K562 (cell line): ENCODE measurements at regions of chr2 and their contacts with region 1.

Region 1: DNA sequence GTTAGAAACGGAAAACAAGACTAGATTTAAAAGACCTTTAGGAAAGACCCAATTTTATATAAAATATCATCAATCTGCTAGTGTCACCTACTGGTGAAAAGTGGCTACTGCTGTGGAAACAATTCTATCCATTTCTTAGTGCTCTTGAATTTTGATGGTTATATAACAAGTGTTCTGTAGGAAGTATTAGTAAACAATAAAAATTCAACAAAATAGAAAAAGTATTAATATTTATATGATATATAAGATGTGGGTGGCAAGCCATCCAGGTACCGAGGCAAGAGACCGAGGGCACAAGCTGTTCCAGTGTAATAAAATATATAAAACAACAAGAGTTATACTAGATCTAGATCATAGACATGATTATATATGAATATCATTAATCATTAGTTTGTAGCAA is 6.2 kb upstream of the TMEM87B start:
- DNase-seq: peak; percentile 27 to 68 (median 37)
- ATAC-seq: peak; percentile 87
- H3K4me3 ChIP-seq: no peak overlapping the region
- H3K27ac ChIP-seq: no peak overlapping the region
- H3K4me1 ChIP-seq: peaks cover 8 to 17% of the 10 kb centered on the region in 2 experiments; a peak in 4 of 5 replicates
- H3K27me3 ChIP-seq: no peaks in the 10 kb centered on the region
- CTCF ChIP-seq: peak; percentile 56 to 94 (median 67); a peak in 5 of 6 replicates
- EP300 ChIP-seq: no peak
- POLR2A ChIP-seq: no peak
- RAD21 ChIP-seq: peak; percentile 92

Region 2: GRCh38 chr2:111897924-111898702 is 150.8 kb before region 1 on chr2 and contains the start of gene MERTK:
- CTCF ChIA-PET with region 1: interaction called, 8 read pairs
- POLR2A ChIA-PET with region 1: interaction called, 4 read pairs
- in situ Hi-C with region 1: no loop called
- intact Hi-C with region 1: loop called (anchors 1 kb)
- DNase-seq: peak; percentile 77 to 85 (median 84)
- ATAC-seq: peak; percentile 92
- H3K4me3 ChIP-seq: peak within 1 kb of the TSS; percentile 59
- H3K27ac ChIP-seq: 0 out of 3 replicates have a peak within 1 kb of the TSS, but pooled peaks have one; percentile 22
- H3K4me1 ChIP-seq: peaks cover 20 to 24% of the 10 kb centered on the region in 2 experiments
- H3K27me3 ChIP-seq: peaks cover 0 to 6% of the 10 kb centered on the region in 2 experiments; a peak in 2 of 5 replicates
- CTCF ChIP-seq: peak; percentile 71 to 93 (median 79)
- EP300 ChIP-seq: no peak
- POLR2A ChIP-seq: peak; percentile 65; the same call in 1 of the 2 replicates
- RAD21 ChIP-seq: peak; percentile 84 to 89
- polyA plus RNA-seq, gene MERTK: 0.23 to 0.31 TPM

Region 3: DNA sequence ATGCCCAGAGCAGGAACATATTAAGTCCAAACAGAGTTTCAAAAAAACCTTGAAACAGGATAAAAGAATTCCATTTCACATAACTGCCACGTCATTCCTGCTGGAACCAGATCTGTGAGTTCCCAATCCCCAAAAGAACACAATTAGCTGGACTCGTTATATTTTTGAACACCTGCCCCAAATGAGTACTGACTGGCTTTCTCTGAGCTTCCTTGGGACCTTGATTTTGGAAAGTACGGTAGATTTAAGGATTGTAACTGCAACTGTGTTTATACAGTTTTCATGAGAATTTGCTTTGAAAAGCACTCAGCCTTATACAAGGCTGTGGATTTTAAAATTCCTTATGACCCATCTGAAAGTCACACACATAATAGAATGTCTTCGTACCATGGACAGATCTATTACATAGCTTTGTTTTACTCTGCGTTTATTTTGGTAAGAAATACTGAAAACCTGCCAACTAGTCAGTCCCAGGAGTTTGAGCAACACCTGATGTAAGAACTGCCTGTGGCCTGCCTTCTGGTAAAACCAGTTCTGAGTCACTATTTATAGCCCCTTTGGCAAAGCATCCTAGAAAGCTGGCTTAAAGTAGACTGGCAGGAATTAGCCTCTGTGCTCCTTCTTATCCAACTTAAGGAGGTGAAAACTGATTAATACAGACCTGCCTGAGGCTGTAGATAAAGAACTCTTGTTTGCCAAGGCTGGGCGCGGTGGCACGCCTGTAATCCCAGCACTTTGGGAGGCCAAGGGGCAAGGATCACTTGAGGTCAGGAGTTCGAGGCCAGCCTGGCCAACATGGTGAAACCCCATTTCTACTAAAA is 102.4 kb before region 1 on chr2:
- CTCF ChIA-PET with region 1: no interaction called
- POLR2A ChIA-PET with region 1: no interaction called
- in situ Hi-C with region 1: no loop called
- intact Hi-C with region 1: no loop called
- DNase-seq: no peak
- ATAC-seq: no peak
- H3K4me3 ChIP-seq: no peak overlapping the region
- H3K27ac ChIP-seq: no peak overlapping the region
- H3K4me1 ChIP-seq: no peaks in the 10 kb centered on the region
- H3K27me3 ChIP-seq: peaks cover 3 to 17% of the 10 kb centered on the region in 2 experiments; a peak in 3 of 5 replicates
- CTCF ChIP-seq: no peak
- EP300 ChIP-seq: no peak
- POLR2A ChIP-seq: no peak
- RAD21 ChIP-seq: no peak

Region 4: GRCh38 chr2:112216166-112216565 is 167.3 kb after region 1 on chr2:
- CTCF ChIA-PET with region 1: no interaction called
- POLR2A ChIA-PET with region 1: no interaction called
- in situ Hi-C with region 1: no loop called
- intact Hi-C with region 1: no loop called
- DNase-seq: peak in 2 of 4 experiments; percentile 20 to 23
- ATAC-seq: peak; percentile 71; the same call in 1 of the 3 replicates
- H3K4me3 ChIP-seq: no peak overlapping the region
- H3K27ac ChIP-seq: no peak overlapping the region
- H3K4me1 ChIP-seq: no peaks in the 10 kb centered on the region
- H3K27me3 ChIP-seq: no peaks in the 10 kb centered on the region
- CTCF ChIP-seq: peak; percentile 13 to 40 (median 39); a peak in 3 of 6 replicates
- EP300 ChIP-seq: no peak
- POLR2A ChIP-seq: no peak
- RAD21 ChIP-seq: peak in 1 of 2 experiments; percentile 62; a peak in 2 of 4 replicates